PC-9 (cell line): ENCODE measurements at regions of chr3 and their contacts with region 1.

Region 1: DNA sequence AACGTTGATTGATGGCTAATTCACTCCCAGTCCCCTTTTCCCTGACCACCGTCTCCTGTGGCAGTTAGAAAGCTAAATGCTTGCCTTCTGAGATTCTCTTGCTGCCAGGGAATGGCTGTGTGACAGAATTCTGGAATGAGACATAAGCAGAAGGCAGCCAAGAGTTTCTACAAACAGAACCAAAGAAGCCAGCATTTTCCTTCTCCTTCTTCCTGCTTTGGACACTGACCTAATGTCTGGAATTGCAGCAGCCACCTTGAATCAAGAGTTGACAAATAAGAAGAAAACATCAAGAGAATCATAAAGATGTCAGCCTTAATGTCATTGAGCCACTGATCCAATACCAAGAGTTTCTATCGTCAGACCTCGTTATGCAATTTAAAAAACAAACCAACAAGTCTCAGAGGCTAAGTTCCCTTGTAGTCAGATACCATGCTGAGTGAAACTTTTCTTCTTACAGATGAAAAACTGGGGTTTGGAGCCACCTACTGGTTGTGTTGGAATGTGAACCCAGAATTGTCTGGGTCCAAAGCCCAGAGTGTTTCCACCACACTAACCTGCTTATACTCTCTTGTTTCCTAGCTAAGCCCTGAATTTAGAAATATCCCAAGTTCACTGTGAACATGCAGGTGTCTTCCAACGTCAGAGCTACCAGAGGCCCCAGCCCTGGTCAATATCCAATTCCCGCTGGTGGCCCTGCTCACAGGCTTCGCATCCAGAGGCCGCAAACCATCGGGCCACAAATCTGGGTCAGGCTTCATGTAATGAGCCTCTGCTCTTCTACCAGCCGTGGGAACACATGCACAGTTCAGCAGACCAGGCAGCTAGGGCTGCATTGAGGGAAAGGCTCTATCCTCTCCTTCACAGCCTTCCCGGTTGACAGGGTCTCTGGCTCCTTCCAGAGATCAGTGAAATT is 42.5 kb downstream of the MCF2L2 start:
- DNase-seq: peak; percentile 57 to 75
- H3K4me3 ChIP-seq: no peak overlapping the region
- H3K27ac ChIP-seq: peak overlapping the region; percentile 5; the same call in 1 of the 2 replicates
- H3K4me1 ChIP-seq: peaks cover 27% of the 10 kb centered on the region
- H3K27me3 ChIP-seq: no peaks in the 10 kb centered on the region
- CTCF ChIP-seq: peak; percentile 94

Region 2: GRCh38 chr3:182909318-182910040 is 476.5 kb before region 1 on chr3:
- CTCF ChIA-PET with region 1: interaction called, 3 read pairs
- POLR2A ChIA-PET with region 1: no interaction called
- intact Hi-C with region 1: loop called (anchors 2 kb)
- DNase-seq: no peak
- H3K4me3 ChIP-seq: no peak overlapping the region
- H3K27ac ChIP-seq: no peak overlapping the region
- H3K4me1 ChIP-seq: no peaks in the 10 kb centered on the region
- H3K27me3 ChIP-seq: no peaks in the 10 kb centered on the region
- CTCF ChIP-seq: peak; percentile 83

Region 3: DNA sequence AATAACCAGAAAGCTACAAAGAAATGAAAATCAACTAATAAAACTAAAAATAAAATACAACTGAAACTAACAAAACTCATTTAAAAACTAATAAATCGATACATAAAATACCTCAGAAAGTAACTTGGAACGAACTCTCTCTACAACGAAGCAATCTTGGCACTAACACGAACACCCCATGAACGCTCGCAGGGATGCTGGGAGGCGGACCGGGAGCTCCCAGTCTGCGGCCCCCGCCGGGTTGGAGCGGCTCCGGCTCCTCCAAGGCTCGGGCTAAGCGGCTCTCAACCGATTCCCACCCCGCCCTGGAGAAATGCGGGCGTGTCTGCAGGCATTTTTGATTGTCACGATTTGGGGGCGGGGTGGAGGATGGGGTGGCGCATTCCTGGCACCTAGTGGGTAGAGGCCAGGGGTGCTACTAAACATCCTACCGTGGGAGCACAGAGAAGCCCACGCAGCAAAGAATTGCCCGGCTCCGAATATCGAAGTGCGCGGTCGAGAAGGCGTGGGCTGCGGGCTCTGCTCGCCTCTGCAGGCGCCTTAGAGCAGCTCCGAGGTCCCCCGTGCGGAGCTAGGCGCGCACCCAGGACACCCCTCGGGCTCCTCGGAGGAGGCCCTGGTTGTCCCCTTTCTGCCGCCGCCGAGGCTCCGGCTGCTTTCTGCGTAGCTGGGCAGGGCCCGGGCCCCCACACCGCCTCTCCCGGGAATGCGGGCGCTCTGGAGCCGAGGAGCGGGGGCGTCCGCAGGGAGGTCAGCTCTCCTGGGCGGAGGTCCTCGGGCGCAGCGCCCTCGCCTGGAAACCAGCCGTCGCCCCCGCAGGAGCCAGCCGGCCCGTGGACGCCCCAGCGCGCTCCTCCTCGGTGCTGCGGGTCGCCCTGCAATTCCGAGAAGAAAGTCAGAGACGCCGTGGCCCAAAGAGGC is 207.1 kb before region 1 on chr3:
- CTCF ChIA-PET with region 1: interaction called, 85 read pairs
- POLR2A ChIA-PET with region 1: no interaction called
- intact Hi-C with region 1: loop called (anchors 1 kb)
- DNase-seq: peak; percentile 52 to 73
- H3K4me3 ChIP-seq: peak overlapping the region; percentile 71
- H3K27ac ChIP-seq: no peak overlapping the region
- H3K4me1 ChIP-seq: no peaks in the 10 kb centered on the region; the same call in 1 of the 2 replicates
- H3K27me3 ChIP-seq: no peaks in the 10 kb centered on the region
- CTCF ChIP-seq: peak; percentile 52; the same call in 1 of the 2 replicates

Region 4: DNA sequence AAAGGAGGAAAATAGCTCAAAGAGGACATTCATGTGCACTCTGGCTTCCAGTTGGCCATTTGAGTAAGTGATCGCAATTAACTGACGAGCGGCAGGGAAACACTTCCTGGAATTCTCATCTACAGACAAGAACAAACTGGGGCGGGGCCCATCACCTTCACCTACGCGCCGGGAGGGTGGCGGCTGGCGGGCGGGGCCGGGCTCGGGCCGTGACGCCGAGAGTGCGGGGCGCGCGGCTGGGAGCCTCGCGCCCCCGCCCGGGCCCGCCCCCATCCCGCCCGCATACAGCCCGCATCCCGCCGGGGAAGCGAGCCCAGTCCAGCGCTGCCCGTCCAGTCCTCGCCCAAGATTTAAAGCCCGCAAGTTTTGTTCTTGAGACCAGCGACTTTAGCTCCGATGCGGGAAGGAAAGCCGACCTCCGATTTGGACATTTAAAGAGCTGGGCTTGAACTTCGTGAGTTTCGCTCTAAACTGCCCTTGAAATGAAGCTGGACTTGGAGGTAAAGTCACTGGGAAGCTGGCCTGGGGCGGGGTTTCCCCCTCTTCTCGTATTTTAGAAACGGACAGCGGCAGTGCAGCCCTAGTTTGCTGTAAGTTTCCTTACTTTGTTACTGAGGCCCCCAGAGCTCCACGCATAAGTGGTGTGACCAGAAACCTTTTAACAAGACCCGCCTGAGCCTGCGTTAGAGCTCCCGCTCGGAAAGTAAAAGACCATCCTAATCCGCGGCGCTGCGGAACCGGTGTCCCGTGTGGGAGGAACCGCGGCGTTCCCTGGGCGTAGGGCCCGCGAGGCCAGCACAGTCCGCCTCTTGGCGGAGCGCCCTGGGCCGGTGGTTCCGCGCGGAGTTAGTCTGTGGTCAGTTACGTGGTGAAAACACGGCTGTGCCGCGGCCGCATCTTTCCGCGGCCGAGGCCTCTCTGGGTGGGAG is 132.7 kb before region 1 on chr3 and contains the start of gene B3GNT5:
- CTCF ChIA-PET with region 1: interaction called, 6 read pairs
- POLR2A ChIA-PET with region 1: no interaction called
- intact Hi-C with region 1: loop called (anchors 1 kb)
- DNase-seq: peak; percentile 82 to 85
- H3K4me3 ChIP-seq: peak within 1 kb of the TSS; percentile 96
- H3K27ac ChIP-seq: peak within 1 kb of the TSS; percentile 93
- H3K4me1 ChIP-seq: peaks cover 31% of the 10 kb centered on the region
- H3K27me3 ChIP-seq: no peaks in the 10 kb centered on the region
- CTCF ChIP-seq: no peak
- total RNA-seq, gene B3GNT5: 30.7 and 33.6 TPM in 2 replicates

Region 5: DNA sequence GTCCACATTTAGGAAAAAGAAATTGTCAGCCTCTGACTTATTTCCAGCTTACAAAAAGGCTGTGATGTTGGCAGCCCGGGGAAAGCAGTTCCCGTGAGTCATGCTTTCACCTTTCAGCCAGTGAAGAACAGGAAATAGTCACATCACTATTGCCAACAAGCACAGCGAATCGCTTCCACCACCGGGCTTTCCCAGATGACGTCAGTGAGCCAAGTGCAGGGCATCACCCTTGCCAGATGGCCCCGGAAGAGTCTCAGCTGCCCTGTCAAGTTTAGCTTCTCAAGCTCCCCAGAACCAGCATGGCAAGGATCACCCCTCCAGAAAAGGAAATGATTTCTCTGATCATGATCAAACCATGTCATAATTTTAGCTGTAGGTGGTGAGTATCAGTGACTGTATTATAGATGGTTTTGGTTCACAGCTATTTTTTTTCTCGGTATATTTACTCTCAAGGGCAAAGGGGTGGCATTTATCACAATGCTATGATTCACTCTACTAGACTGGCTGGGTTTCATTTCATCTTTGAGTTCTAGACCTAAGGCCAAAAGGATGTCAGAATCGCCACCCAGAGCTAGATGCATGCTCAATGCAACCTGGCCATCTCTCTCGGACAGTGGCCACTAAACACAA is 100.0 kb before region 1 on chr3:
- CTCF ChIA-PET with region 1: interaction called, 8 read pairs
- POLR2A ChIA-PET with region 1: no interaction called
- intact Hi-C with region 1: loop called (anchors 5 kb)
- DNase-seq: peak; percentile 96 to 100
- H3K4me3 ChIP-seq: peak overlapping the region; percentile 58; the same call in 1 of the 2 replicates
- H3K27ac ChIP-seq: peak overlapping the region; percentile 97
- H3K4me1 ChIP-seq: peaks cover 66% of the 10 kb centered on the region
- H3K27me3 ChIP-seq: no peaks in the 10 kb centered on the region
- CTCF ChIP-seq: no peak

Region 6: GRCh38 chr3:183370391-183370790 is 15.6 kb before region 1 on chr3:
- CTCF ChIA-PET with region 1: interaction called, 10 read pairs
- POLR2A ChIA-PET with region 1: no interaction called
- intact Hi-C with region 1: no loop called
- DNase-seq: peak in 1 of 2 experiments; percentile 40
- H3K4me3 ChIP-seq: no peak overlapping the region
- H3K27ac ChIP-seq: peak overlapping the region; percentile 97
- H3K4me1 ChIP-seq: peaks cover 48% of the 10 kb centered on the region
- H3K27me3 ChIP-seq: no peaks in the 10 kb centered on the region
- CTCF ChIP-seq: no peak

Region 7: DNA sequence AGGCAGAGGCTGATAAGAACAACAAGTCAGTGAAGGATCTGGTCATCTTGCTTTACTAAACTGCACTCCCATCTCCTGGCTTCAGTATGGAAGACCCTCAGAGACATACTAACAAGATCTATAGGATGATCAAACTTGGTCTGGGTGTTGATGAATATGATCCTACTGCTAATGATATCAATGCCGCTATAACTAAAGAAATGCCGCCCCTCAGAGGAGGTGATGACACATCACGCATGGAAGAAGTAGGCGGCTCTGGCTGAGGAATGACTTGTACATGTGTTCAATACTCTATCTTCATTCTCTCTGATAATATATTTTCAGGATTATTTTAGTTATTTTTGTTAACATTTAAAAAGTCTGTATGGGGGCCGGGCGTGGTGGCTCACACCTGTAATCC is 731.7 kb after region 1 on chr3:
- CTCF ChIA-PET with region 1: no interaction called
- POLR2A ChIA-PET with region 1: no interaction called
- intact Hi-C with region 1: no loop called
- DNase-seq: no peak
- H3K4me3 ChIP-seq: no peak overlapping the region
- H3K27ac ChIP-seq: no peak overlapping the region
- H3K4me1 ChIP-seq: no peaks in the 10 kb centered on the region
- H3K27me3 ChIP-seq: no peaks in the 10 kb centered on the region
- CTCF ChIP-seq: 0 out of 2 replicates have a peak, but pooled peaks have one; percentile 20

Region 8: DNA sequence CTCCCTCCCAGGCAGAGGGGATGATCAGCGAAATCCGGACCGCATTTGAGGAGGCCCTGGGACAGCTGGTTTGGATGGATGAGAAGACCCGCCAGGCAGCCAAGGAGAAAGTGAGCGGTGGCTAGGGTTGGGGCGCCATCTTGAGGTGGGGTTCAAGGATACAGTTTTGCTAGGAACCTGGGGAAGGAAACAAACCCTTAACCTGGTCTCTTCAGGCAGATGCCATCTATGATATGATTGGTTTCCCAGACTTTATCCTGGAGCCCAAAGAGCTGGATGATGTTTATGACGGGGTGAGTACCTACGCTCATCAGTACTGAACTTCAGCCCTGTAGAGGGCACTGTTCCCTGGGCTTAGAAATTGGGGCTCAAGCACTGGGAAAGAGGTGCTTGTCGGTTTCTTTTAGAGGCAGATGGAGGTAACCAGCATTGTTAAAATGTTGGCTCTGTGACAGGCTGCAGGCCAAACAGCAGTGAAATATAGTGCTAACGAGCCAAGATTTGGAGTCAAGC is 903.5 kb after region 1 on chr3:
- CTCF ChIA-PET with region 1: no interaction called
- POLR2A ChIA-PET with region 1: no interaction called
- intact Hi-C with region 1: loop called (anchors 2 kb)
- DNase-seq: peak; percentile 63 to 75
- H3K4me3 ChIP-seq: no peak overlapping the region
- H3K27ac ChIP-seq: no peak overlapping the region
- H3K4me1 ChIP-seq: no peaks in the 10 kb centered on the region
- H3K27me3 ChIP-seq: no peaks in the 10 kb centered on the region; the same call in 1 of the 2 replicates
- CTCF ChIP-seq: peak; percentile 81